ENCODE measurements at regions of chr11 and their contacts with region 1.

Region 1: DNA sequence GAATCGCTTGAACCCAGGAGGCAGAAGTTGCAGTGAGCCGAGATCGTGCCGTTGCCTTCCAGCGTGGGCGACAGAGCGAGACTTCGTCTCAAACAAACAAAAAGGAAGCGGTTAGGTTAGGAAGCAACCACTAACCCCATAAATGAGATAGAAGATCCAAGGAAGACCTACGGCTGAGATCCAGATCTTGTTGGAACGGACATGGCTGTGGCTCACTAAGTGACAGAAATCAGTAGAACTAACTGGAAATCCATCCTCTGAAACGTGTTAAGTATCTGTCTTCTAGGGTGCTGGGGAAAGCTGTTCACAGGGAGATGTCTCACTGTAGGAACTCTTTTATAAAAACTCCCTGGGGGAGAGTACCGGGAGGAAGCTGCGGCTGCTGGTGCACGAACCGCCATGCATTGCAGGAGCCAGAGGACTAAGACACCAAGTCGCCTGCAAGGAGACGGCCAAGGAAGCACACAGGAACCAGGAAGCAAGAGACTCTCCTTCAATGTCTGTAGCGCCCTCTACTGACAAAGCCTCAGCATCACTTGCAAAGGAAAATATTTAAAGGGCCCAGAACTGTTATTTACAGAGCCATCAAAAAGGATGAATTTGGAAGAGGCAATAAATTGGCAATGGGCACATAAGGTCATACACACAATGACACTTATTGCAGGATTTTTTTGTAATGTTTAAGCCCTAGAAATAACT is 16.9 kb upstream of the SPTY2D1 start:
- DNase-seq: peak; percentile 57 to 64 (median 62)
- H3K4me3 ChIP-seq: no peak overlapping the region
- H3K4me3 Mint-ChIP-seq: peak overlapping the region in 4 of 8 donors; percentile 17 to 76 (median 48)
- H3K27ac ChIP-seq: no peak overlapping the region
- H3K27ac Mint-ChIP-seq: peak overlapping the region in 5 of 7 donors; percentile 59 to 90 (median 75)
- H3K4me1 ChIP-seq: no peaks in the 10 kb centered on the region
- H3K4me1 Mint-ChIP-seq: peaks cover 5 to 10% (median 8%) of the 10 kb centered on the region in 4 donors
- H3K27me3 ChIP-seq: no peaks in the 10 kb centered on the region
- H3K27me3 Mint-ChIP-seq: no peaks in the 10 kb centered on the region

Region 2: GRCh38 chr11:18243783-18244362 is 407.1 kb before region 1 on chr11:
- CTCF ChIA-PET with region 1: interaction called, 7 read pairs
- POLR2A ChIA-PET with region 1: no interaction called
- intact Hi-C with region 1: loop called (anchors 10 kb)
- DNase-seq: peak; percentile 71 to 79 (median 73)
- H3K4me3 ChIP-seq: no peak overlapping the region
- H3K4me3 Mint-ChIP-seq: peak overlapping the region in 1 of 8 donors; percentile 46
- H3K27ac ChIP-seq: no peak overlapping the region
- H3K27ac Mint-ChIP-seq: peak overlapping the region in 6 of 7 donors; percentile 2 to 48 (median 24)
- H3K4me1 ChIP-seq: peaks cover 8% of the 10 kb centered on the region
- H3K4me1 Mint-ChIP-seq: peaks cover 10 to 27% (median 18%) of the 10 kb centered on the region in 4 donors
- H3K27me3 ChIP-seq: peaks cover 3% of the 10 kb centered on the region
- H3K27me3 Mint-ChIP-seq: peaks cover 8 to 9% of the 10 kb centered on the region in 2 donors

Region 3: DNA sequence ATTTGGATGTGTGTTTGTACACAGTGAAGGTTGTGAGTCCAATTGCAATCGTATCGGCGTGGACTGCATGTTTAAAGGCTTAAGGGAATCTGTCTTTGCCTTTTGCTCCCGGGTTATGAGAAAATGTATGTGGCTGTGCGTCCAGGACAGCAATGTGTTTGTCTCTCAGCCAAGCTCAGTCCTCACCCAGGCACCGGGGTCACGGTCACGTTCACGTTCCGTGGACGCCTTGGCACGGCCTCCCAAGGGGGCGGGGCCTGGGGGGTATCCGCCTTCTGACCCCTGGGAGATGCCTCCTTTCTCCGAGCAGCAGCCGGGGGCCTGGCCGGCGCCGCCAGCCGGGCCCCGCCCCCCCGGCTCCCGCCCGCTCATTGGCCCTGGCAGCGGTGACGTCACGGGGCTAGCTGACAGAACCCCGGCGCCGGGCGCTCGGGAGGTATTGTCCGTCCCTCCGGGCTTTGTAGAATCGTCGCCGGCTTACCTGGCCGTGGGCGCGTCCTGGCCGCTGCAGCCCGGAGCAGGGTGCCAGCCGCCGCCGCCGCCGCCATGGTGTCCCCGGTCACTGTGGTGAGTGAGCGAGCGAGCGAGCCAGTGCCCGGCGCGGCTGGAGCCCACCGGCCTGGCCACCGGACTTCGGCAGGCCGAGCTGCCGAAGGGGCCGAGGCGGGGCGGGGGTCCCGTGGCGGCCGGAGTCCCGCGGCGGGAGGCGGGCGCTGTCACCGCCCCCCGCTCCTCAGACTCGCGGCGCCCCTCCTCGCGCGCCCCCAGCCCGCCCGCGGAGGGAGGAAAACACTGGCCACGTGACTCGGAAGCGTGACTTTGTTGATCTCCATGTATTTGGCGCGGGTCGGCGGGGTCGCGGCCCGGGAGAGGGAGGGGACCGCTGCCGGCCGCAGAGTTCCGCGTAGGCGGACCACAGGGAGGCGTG is 47.6 kb after region 1 on chr11 and contains the start of gene TMEM86A:
- CTCF ChIA-PET with region 1: no interaction called
- POLR2A ChIA-PET with region 1: no interaction called
- intact Hi-C with region 1: no loop called
- DNase-seq: peak; percentile 87 to 91 (median 88)
- H3K4me3 ChIP-seq: peak within 1 kb of the TSS in 1 of 2 donors; percentile 64
- H3K4me3 Mint-ChIP-seq: peak within 1 kb of the TSS; percentile 79 to 88 (median 84)
- H3K27ac ChIP-seq: peak within 1 kb of the TSS; percentile 63
- H3K27ac Mint-ChIP-seq: peak within 1 kb of the TSS; percentile 64 to 95 (median 92)
- H3K4me1 ChIP-seq: peaks cover 15% of the 10 kb centered on the region
- H3K4me1 Mint-ChIP-seq: peaks cover 12 to 22% (median 17%) of the 10 kb centered on the region in 4 donors
- H3K27me3 ChIP-seq: no peaks in the 10 kb centered on the region
- H3K27me3 Mint-ChIP-seq: no peaks in the 10 kb centered on the region
- total RNA-seq, gene TMEM86A: 2.5 to 4.0 TPM